Activated naive CD4-positive, alpha-beta T cell treated with anti-CD3 and anti-CD28 coated beads for 36 hours (primary cell): ENCODE measurements at regions of chr1 and their contacts with region 1.

Region 1: DNA sequence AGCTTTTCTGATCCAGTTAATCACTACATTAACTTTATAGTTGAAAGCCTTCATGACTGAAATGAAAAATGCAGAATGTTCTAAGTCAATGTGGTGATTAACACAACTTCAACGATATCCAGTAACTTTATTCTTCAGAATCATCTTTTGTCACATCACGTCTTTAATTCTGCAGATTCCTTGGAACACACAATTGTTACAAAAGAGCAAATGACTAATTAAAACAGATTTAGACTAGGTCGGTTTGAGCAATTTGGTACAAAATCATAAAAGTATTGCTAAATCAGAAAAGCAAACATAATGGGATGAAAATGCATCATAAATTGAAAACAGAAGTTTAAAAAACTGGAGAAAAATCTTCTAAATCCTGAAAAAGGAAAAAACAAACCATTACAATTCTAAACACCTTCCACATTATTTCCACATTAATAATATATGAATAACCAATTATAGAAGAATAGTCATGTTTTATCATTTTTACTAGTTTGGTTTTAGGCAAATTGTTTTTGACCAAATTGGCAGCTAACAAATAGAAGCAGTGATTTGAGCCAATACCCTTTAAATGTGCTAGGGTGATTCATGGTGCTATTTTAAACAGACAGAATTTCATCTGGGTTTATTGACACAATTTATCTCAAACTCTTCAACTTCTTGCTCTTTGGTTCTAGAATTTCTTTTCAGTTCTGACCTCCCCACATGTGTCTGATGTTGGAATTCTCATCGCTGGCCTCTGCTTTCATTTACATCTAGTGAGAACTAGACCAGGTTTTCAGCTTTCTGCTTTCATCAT is 468.1 kb upstream of the PTBP2 start:
- DNase-seq: no peak
- H3K4me3 Mint-ChIP-seq: no peak overlapping the region
- H3K27ac Mint-ChIP-seq: no peak overlapping the region
- H3K4me1 Mint-ChIP-seq: no peaks in the 10 kb centered on the region
- H3K27me3 Mint-ChIP-seq: no peaks in the 10 kb centered on the region

Region 2: GRCh38 chr1:96674911-96675310 is 421.5 kb after region 1 on chr1:
- CTCF ChIA-PET with region 1: no interaction called
- intact Hi-C with region 1: loop called (anchors 5 kb)
- DNase-seq: no peak
- H3K4me3 Mint-ChIP-seq: no peak overlapping the region
- H3K27ac Mint-ChIP-seq: no peak overlapping the region
- H3K4me1 Mint-ChIP-seq: no peaks in the 10 kb centered on the region
- H3K27me3 Mint-ChIP-seq: peaks cover 9% of the 10 kb centered on the region